K562 (cell line): ENCODE measurements at regions of chr1 and their contacts with region 1.

Region 1: DNA sequence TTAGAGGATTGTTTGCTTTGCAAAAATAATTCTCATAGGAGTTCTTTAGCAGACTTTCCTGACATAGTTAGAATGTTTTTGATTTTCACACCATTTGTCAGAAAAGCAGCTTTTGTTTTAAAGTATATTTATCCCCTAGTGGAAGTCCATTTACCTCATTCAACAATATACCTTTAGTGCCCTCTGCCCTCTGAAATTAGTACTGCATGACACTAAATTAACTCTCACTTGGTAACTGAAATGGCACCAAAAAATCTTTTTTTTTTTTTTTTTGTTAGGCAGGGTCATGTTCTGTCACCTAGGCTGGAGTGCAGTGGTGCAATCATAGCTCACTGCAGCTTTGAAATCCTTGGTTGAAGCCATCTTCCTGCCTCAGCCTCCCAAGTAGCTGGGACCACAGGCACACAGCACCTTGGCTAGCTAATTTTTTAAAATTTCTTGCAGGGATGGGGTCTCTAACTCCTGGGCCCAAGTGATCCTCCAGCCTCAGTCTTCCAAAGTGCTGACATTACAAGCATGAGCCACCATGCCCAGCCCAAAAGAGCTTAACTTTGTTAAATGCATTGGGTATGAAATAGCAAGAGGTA is 13.6 kb downstream of the LRRC42 start:
- DNase-seq: peak in 3 of 4 experiments; percentile 35 to 45 (median 43)
- ATAC-seq: peak; percentile 76
- H3K4me3 ChIP-seq: no peak overlapping the region
- H3K27ac ChIP-seq: no peak overlapping the region
- H3K4me1 ChIP-seq: peaks cover 0 to 28% of the 10 kb centered on the region in 2 experiments; a peak in 3 of 5 replicates
- H3K27me3 ChIP-seq: no peaks in the 10 kb centered on the region
- CTCF ChIP-seq: peak; percentile 64 to 87 (median 87); a peak in 5 of 6 replicates
- EP300 ChIP-seq: no peak
- POLR2A ChIP-seq: no peak
- RAD21 ChIP-seq: peak; percentile 65 to 83

Region 2: GRCh38 chr1:53765657-53766056 is 194.1 kb before region 1 on chr1:
- CTCF ChIA-PET with region 1: no interaction called
- POLR2A ChIA-PET with region 1: no interaction called
- in situ Hi-C with region 1: no loop called
- intact Hi-C with region 1: loop called (anchors 10 kb)
- DNase-seq: no peak
- ATAC-seq: peak; percentile 61
- H3K4me3 ChIP-seq: no peak overlapping the region
- H3K27ac ChIP-seq: no peak overlapping the region
- H3K4me1 ChIP-seq: peaks cover 0 to 2% of the 10 kb centered on the region in 2 experiments; a peak in 2 of 5 replicates
- H3K27me3 ChIP-seq: no peaks in the 10 kb centered on the region
- CTCF ChIP-seq: no peak
- EP300 ChIP-seq: no peak
- POLR2A ChIP-seq: no peak
- RAD21 ChIP-seq: no peak

Region 3: GRCh38 chr1:53889304-53890298 is 70.2 kb before region 1 on chr1 and contains the start of gene YIPF1:
- CTCF ChIA-PET with region 1: no interaction called
- POLR2A ChIA-PET with region 1: no interaction called
- in situ Hi-C with region 1: loop called (anchors 5 kb)
- intact Hi-C with region 1: no loop called
- DNase-seq: peak; percentile 95 to 98 (median 98)
- ATAC-seq: peak; percentile 99
- H3K4me3 ChIP-seq: peak within 1 kb of the TSS; percentile 88
- H3K27ac ChIP-seq: peak within 1 kb of the TSS; percentile 53; the same call in 2 of the 3 replicates
- H3K4me1 ChIP-seq: peaks cover 15 to 24% of the 10 kb centered on the region in 2 experiments; a peak in 4 of 5 replicates
- H3K27me3 ChIP-seq: no peaks in the 10 kb centered on the region; a peak in 1 of 5 replicates
- CTCF ChIP-seq: no peak
- EP300 ChIP-seq: no peak
- POLR2A ChIP-seq: peak; percentile 78
- RAD21 ChIP-seq: 0 out of 4 replicates have a peak, but pooled peaks of 1 of the 2 experiments have one; percentile 6
- polyA plus RNA-seq, gene YIPF1: 11.5 to 15.2 TPM

Region 4: DNA sequence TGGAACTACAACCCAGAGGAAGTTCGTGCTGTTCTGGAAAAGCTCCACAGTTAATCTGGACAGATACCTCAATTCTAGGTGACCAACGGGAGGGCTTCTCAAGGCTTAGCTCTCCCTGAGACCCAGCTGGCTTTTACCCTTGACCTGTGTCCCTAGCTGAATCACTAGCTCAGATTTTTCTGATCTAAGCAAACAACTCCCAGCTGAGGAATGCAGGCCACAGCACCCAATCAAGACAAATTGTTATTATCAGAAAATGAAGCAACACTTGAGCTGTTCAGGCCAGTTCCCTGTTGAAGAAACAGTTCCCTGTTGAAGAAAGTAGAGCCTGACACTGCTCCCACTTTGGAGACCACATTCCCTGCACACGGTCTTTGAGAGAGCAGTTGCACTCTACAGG is 49.8 kb before region 1 on chr1:
- CTCF ChIA-PET with region 1: interaction called, 14 read pairs
- POLR2A ChIA-PET with region 1: no interaction called
- in situ Hi-C with region 1: no loop called
- intact Hi-C with region 1: no loop called
- DNase-seq: no peak
- ATAC-seq: no peak
- H3K4me3 ChIP-seq: no peak overlapping the region
- H3K27ac ChIP-seq: no peak overlapping the region
- H3K4me1 ChIP-seq: no peaks in the 10 kb centered on the region; a peak in 1 of 5 replicates
- H3K27me3 ChIP-seq: no peaks in the 10 kb centered on the region
- CTCF ChIP-seq: no peak
- EP300 ChIP-seq: no peak
- POLR2A ChIP-seq: no peak
- RAD21 ChIP-seq: no peak